ENCODE measurements at regions of chr14 and their contacts with region 1.

Region 1: DNA sequence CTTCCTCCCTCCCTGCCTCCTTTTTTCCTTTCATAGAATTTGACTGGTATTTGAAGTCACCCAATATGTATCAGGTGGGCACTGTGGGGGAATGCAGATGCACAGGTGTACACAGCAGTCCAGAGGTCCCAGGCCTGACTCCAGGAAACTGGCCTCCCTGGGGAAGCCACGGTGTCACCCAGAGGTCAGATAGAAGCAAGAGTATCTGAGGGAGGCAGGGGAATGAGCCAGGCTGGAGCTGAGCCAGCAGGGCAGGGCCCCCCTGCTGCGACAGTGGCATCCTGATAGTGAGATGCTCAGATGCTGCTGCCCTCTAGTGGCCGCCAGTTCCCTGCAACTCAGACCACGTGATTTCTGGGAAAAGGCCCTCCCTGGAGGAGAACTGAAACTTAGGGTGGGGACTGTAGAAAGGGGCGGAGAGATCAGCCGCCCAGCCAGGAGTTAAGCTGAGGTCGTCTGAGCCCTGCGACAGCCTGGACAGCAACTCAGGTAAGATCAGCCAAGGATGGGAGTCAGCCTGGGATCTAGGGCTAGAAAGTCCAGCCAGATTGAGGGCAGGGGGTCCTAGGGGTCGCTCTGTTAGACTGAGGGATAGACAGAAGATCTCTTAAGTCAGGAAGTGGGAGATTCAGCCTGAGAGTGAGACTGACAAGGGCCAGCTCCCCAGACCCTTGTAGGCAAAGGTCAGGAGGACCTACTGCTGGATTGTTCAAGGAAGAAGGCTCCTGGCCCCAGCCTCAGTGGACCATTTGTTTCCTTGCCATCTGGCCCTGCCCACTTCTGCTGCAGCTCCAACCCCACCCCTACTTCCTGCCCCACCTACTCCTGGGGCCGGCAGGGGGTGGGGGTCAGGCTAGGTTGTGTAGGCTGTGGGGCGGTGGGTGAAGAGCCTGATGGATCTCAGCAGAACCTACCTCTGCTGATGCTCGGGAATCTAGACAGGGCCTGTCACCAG is at the start of gene IRF9:
- DNase-seq: peak; percentile 94 to 100 (median 98)
- ATAC-seq: peak; percentile 84
- H3K4me3 ChIP-seq: peak within 1 kb of the TSS; percentile 95
- H3K4me3 Mint-ChIP-seq: peak within 1 kb of the TSS; percentile 95
- H3K27ac ChIP-seq: peak within 1 kb of the TSS; percentile 97 to 98
- H3K27ac Mint-ChIP-seq: peak within 1 kb of the TSS; percentile 98
- H3K4me1 ChIP-seq: peaks cover 52% of the 10 kb centered on the region
- H3K4me1 Mint-ChIP-seq: peaks cover 57% of the 10 kb centered on the region
- H3K27me3 ChIP-seq: no peaks in the 10 kb centered on the region
- H3K27me3 Mint-ChIP-seq: no peaks in the 10 kb centered on the region
- CTCF ChIP-seq: peak; percentile 84
- total RNA-seq, gene IRF9: 248 to 262 TPM

Region 2: DNA sequence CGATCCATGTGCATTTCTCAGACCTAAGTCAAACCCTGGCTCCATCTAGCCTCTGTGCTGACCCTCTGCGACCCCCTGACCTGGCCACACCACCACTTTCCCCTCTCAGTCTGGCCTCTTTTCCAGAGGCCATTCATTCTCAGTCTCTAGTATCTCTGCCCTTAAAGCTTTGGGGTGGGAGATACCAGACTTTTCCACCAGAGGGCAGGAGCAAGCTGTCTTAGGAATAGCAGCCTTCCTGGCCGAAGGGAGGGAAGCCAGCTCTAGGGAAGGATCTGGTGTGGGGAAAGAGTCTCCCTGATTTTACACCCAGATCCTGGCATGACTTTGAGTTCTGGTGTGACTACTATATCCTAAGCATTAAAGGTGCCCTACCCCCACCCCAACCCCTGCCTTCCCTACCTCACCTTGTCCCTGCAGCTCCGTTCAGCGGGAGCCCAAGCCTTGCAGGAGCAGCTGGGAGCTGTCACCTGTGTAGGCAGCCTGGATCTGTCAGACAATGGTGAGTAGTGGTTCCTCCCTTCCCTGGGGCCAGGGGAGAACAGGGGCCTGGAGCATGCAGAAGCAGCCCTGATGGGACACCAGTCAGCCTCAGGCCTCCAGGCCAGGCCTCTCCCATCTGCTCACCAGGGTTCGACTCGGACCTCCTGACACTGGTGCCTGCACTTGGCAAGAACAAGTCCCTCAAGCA is 102.7 kb before region 1 on chr14:
- CTCF ChIA-PET with region 1: no interaction called
- POLR2A ChIA-PET with region 1: interaction called, 11 read pairs
- intact Hi-C with region 1: loop called in 1 of 2 experiments (anchors 1 kb)
- DNase-seq: peak in 6 of 14 experiments; percentile 30 to 82 (median 48)
- ATAC-seq: peak; percentile 83
- H3K4me3 ChIP-seq: no peak overlapping the region
- H3K4me3 Mint-ChIP-seq: no peak overlapping the region
- H3K27ac ChIP-seq: no peak overlapping the region
- H3K27ac Mint-ChIP-seq: no peak overlapping the region
- H3K4me1 ChIP-seq: peaks cover 2% of the 10 kb centered on the region
- H3K4me1 Mint-ChIP-seq: no peaks in the 10 kb centered on the region
- H3K27me3 ChIP-seq: peaks cover 0 to 10% of the 10 kb centered on the region in 2 experiments
- H3K27me3 Mint-ChIP-seq: peaks cover 10% of the 10 kb centered on the region
- CTCF ChIP-seq: peak; percentile 70

Region 3: GRCh38 chr14:24108336-24108874 is 52.7 kb before region 1 on chr14:
- CTCF ChIA-PET with region 1: interaction called, 28 read pairs
- POLR2A ChIA-PET with region 1: interaction called, 137 read pairs
- intact Hi-C with region 1: no loop called
- DNase-seq: no peak
- ATAC-seq: peak; percentile 25
- H3K4me3 ChIP-seq: no peak overlapping the region
- H3K4me3 Mint-ChIP-seq: peak overlapping the region; percentile 83
- H3K27ac ChIP-seq: peak overlapping the region; percentile 28 to 39
- H3K27ac Mint-ChIP-seq: peak overlapping the region; percentile 95
- H3K4me1 ChIP-seq: peaks cover 20% of the 10 kb centered on the region
- H3K4me1 Mint-ChIP-seq: peaks cover 10% of the 10 kb centered on the region
- H3K27me3 ChIP-seq: no peaks in the 10 kb centered on the region
- H3K27me3 Mint-ChIP-seq: no peaks in the 10 kb centered on the region
- CTCF ChIP-seq: no peak

Region 4: GRCh38 chr14:24146978-24147760 is 14.0 kb before region 1 on chr14 and contains the start of gene RNF31:
- CTCF ChIA-PET with region 1: interaction called, 32 read pairs
- POLR2A ChIA-PET with region 1: interaction called, 154 read pairs
- intact Hi-C with region 1: loop called (anchors 1 kb)
- DNase-seq: peak; percentile 91 to 99 (median 97)
- ATAC-seq: peak; percentile 91
- H3K4me3 ChIP-seq: peak within 1 kb of the TSS; percentile 93
- H3K4me3 Mint-ChIP-seq: peak within 1 kb of the TSS; percentile 99
- H3K27ac ChIP-seq: peak within 1 kb of the TSS; percentile 76 to 82
- H3K27ac Mint-ChIP-seq: peak within 1 kb of the TSS; percentile 90
- H3K4me1 ChIP-seq: peaks cover 65% of the 10 kb centered on the region
- H3K4me1 Mint-ChIP-seq: peaks cover 61% of the 10 kb centered on the region
- H3K27me3 ChIP-seq: no peaks in the 10 kb centered on the region
- H3K27me3 Mint-ChIP-seq: no peaks in the 10 kb centered on the region
- CTCF ChIP-seq: no peak
- total RNA-seq, gene RNF31: 46.0 to 57.8 TPM

Region 5: DNA sequence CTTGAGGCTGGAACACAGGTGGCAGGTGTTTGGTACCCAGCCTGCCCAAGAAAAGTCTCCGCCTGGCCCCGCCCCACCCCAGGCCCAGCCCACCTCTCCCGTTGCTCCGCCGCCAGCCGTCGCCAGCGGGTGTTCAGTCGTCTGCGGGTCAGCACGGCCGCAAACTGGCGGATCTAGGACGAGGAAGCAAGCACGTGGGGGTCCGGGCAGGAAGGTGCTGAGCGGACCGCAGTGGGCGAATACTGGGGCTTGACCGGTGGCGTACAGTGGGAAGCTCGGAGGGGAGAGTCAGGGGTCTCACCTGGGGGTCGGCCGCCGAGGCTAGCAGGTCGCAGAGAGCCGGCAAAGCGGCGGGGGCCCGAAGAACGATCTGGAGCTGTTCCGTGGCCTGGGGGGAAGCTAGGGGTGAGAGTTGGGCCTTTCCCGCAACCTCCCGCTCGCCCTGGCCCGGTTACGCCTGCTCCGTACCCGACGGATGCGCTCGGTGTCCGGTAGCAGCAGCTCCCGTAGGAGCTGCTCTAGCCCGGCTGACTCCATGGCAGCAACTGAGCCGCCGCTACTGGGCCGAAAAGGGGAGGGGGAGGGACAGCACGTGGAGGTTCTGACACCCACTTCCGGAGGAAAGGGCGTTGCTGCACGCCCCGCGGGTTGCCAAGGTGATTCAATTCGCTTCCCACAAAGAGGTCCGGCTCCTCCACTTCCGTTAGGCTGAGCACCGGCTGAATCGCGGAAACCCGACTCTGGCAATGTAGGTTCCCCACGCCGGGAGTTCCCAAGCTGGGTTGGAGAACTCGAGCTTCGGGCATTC is 27.3 kb after region 1 on chr14 and contains the start of gene IPO4:
- CTCF ChIA-PET with region 1: interaction called, 24 read pairs
- POLR2A ChIA-PET with region 1: interaction called, 85 read pairs
- intact Hi-C with region 1: loop called in 1 of 2 experiments (anchors 2 kb)
- DNase-seq: peak; percentile 86 to 98 (median 94)
- ATAC-seq: peak; percentile 91
- H3K4me3 ChIP-seq: peak within 1 kb of the TSS; percentile 75
- H3K4me3 Mint-ChIP-seq: peak within 1 kb of the TSS; percentile 93
- H3K27ac ChIP-seq: peak within 1 kb of the TSS; percentile 70 to 88
- H3K27ac Mint-ChIP-seq: peak within 1 kb of the TSS; percentile 91
- H3K4me1 ChIP-seq: peaks cover 32% of the 10 kb centered on the region
- H3K4me1 Mint-ChIP-seq: peaks cover 45% of the 10 kb centered on the region
- H3K27me3 ChIP-seq: no peaks in the 10 kb centered on the region
- H3K27me3 Mint-ChIP-seq: no peaks in the 10 kb centered on the region
- CTCF ChIP-seq: no peak
- total RNA-seq, gene IPO4: 36.6 to 37.9 TPM

Region 6: DNA sequence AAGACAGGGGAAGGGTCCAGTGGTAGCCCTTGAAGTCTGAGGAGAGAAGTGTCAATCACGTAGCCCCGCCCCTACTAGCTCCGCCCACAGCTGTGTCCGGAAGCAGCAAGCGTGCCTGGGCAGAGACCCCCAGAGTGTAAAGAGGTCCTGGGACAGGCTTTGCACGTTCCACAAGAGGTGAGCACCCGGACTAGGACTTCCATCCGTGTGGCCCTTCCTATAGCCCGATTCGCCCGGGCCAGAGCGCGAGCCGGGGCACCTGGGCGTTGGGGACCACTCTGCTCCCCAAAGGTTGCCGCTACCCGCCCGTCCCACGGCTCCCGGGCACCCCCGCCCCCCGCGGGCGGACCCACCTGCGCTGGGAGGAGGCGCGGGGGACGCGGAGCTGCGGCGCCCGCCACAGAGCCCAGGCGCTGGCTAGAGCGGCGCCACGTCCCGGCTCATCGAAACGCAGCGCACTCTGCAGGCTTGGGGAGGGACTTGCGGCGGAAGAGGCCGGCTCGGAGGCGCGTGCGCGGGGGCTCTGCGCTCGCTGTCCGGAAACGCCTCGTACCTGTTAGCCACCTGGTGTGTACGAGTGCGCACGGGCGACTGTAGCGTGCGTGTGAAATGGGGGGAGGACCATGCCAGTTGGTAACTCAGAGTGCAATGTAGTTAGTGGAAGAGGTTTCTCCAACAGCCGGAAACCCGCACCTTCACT is 110.2 kb after region 1 on chr14 and contains the start of gene RABGGTA:
- CTCF ChIA-PET with region 1: interaction called, 4 read pairs
- POLR2A ChIA-PET with region 1: interaction called, 15 read pairs
- intact Hi-C with region 1: no loop called
- DNase-seq: peak; percentile 84 to 99 (median 92)
- ATAC-seq: peak; percentile 83
- H3K4me3 ChIP-seq: peak within 1 kb of the TSS; percentile 86
- H3K4me3 Mint-ChIP-seq: peak within 1 kb of the TSS; percentile 96
- H3K27ac ChIP-seq: peak within 1 kb of the TSS; percentile 92 to 95
- H3K27ac Mint-ChIP-seq: peak within 1 kb of the TSS; percentile 97
- H3K4me1 ChIP-seq: peaks cover 43% of the 10 kb centered on the region
- H3K4me1 Mint-ChIP-seq: peaks cover 40% of the 10 kb centered on the region
- H3K27me3 ChIP-seq: no peaks in the 10 kb centered on the region
- H3K27me3 Mint-ChIP-seq: no peaks in the 10 kb centered on the region
- CTCF ChIP-seq: peak; percentile 75
- total RNA-seq, gene RABGGTA: 52.3 to 55.2 TPM